GM23248 (cell line): ENCODE measurements at regions of chr12 and their contacts with region 1.

Region 1: DNA sequence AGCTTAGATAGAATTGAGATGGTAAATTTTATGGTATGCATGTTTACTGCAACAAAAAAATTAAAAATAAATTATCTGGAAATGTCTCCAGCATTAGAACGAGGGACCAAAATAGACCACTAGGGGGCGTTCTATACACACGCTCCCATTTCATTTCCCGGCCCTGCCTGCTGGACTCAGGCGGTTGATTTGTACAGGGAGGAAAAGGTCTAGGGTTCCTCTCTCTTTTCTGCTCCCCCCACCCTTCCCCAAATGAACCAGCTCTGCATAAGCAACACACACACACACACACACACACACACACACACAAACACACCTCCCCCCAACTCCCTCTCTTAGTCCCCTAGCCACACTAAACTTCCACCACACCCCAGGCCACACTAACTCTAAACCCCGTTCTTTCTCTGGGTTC is 7.8 kb upstream of the DTX1 start:
- DNase-seq: peak; percentile 83
- H3K4me3 ChIP-seq: no peak overlapping the region
- H3K27ac ChIP-seq: no peak overlapping the region
- H3K4me1 ChIP-seq: no peaks in the 10 kb centered on the region
- H3K27me3 ChIP-seq: peaks cover 6% of the 10 kb centered on the region; the same call in 1 of the 2 replicates

Region 2: GRCh38 chr12:113149361-113150150 is 100.8 kb after region 1 on chr12 and contains the start of gene CFAP73:
- in situ Hi-C with region 1: loop called (anchors 10 kb)
- DNase-seq: peak; percentile 90
- H3K4me3 ChIP-seq: 0 out of 2 replicates have a peak within 1 kb of the TSS, but pooled peaks have one; percentile 17
- H3K27ac ChIP-seq: no peak within 1 kb of the TSS
- H3K4me1 ChIP-seq: no peaks in the 10 kb centered on the region
- H3K27me3 ChIP-seq: peaks cover 33% of the 10 kb centered on the region
- total RNA-seq, gene CFAP73: not detected in 2 replicates

Region 3: GRCh38 chr12:113174461-113175384 is 126.0 kb after region 1 on chr12:
- in situ Hi-C with region 1: loop called (anchors 10 kb)
- DNase-seq: peak; percentile 65
- H3K4me3 ChIP-seq: no peak overlapping the region
- H3K27ac ChIP-seq: no peak overlapping the region
- H3K4me1 ChIP-seq: no peaks in the 10 kb centered on the region
- H3K27me3 ChIP-seq: no peaks in the 10 kb centered on the region